HCT116 (cell line): ENCODE measurements at regions of chr10 and their contacts with region 1.

Region 1: DNA sequence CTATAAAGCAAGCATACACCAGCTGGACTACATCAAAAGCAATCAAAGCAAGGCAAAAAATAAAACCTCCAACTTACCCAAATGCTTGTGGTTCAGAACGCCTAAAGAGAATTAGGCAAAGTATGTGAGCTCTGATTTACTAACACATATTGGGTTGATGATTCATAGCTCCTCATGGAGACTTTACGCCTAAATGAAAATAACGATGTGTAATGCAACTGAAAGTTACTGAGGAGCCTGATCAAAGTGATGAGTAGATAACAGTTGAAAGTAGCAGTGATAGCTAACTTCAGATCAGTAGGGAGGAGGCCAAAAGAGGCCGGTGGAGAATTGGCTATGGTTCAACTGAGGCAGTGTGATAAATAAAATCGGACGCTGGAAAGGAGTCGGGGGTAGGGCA is 85.0 kb downstream of the MPP7 start:
- DNase-seq: peak; percentile 96
- ATAC-seq: peak; percentile 78
- H3K4me3 ChIP-seq: peak overlapping the region in 1 of 2 experiments; percentile 43; a peak in 2 of 4 replicates
- H3K27ac ChIP-seq: peak overlapping the region; percentile 98
- H3K4me1 ChIP-seq: peaks cover 89 to 90% of the 10 kb centered on the region in 2 experiments
- H3K27me3 ChIP-seq: no peaks in the 10 kb centered on the region
- CTCF ChIP-seq: no peak
- POLR2A ChIP-seq: no peak
- RAD21 ChIP-seq: peak; percentile 46

Region 2: DNA sequence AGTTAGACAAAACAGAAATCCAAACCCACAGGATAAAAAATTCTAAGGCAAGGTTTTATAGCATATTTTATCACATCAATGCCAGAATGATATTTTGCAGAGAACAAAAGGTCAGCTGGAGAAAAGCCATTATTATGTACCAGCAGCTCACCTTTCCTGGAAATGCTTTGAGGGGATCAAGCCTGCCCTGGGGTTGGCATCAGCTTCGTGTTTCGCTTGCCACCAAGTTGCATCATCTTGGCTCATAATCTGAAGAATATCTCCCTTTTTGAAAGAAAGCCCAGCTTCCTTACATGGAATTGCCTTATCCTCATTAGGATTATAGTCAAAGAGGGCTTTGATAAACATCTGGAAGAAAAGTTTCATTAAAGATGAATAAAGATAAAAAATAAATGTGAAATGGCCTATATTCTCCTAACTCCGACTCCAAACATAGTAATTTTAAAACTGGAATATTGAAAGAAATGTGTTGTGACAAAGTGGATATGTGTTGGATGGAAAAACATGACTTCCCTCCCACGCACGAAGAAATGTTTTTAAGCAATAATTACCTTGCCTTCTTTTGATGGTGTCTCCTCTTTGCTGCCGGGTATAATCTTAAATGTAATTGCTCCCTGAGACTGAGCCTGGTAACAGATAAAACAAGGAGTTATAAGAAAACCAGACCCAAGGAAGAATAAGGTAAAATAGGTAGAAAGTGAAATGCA is 97.7 kb before region 1 on chr10:
- CTCF ChIA-PET with region 1: no interaction called
- POLR2A ChIA-PET with region 1: no interaction called
- RAD21 ChIA-PET with region 1: no interaction called
- intact Hi-C with region 1: loop called (anchors 5 kb)
- DNase-seq: peak; percentile 90
- ATAC-seq: peak; percentile 39
- H3K4me3 ChIP-seq: peak overlapping the region in 1 of 2 experiments; percentile 8; a peak in 1 of 4 replicates
- H3K27ac ChIP-seq: peak overlapping the region; percentile 96
- H3K4me1 ChIP-seq: peaks cover 75 to 94% of the 10 kb centered on the region in 2 experiments
- H3K27me3 ChIP-seq: no peaks in the 10 kb centered on the region
- CTCF ChIP-seq: no peak
- POLR2A ChIP-seq: no peak
- RAD21 ChIP-seq: peak; percentile 22; the same call in 1 of the 2 replicates